ENCODE measurements at regions of chr6 and their contacts with region 1.

Region 1: GRCh38 chr6:19245656-19246055 is 591.5 kb upstream of the ID4 start:
- H3K4me3 Mint-ChIP-seq: no peak overlapping the region
- H3K27ac Mint-ChIP-seq: no peak overlapping the region
- H3K4me1 Mint-ChIP-seq: no peaks in the 10 kb centered on the region
- H3K27me3 Mint-ChIP-seq: no peaks in the 10 kb centered on the region

Region 2: DNA sequence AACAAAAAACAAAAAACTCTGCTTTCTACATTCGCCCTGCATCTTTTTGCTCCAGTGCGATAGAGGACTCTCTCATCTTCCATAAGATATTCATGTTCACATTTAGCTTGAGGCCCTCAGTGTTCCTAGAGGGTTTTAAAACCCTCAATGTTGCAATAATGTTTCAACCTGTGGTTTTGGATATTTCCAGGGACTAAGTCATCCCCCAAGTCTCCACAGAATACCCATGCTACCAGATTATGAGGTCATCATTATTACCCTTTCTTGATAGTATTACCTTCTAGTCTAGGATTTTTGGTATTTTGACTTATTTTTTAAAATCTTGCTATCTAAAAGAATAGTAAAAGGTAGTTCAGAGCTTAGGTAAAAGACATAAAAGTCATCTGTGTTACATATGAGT is 111.0 kb after region 1 on chr6:
- intact Hi-C with region 1: loop called (anchors 10 kb)
- H3K4me3 Mint-ChIP-seq: no peak overlapping the region
- H3K27ac Mint-ChIP-seq: no peak overlapping the region
- H3K4me1 Mint-ChIP-seq: no peaks in the 10 kb centered on the region
- H3K27me3 Mint-ChIP-seq: no peaks in the 10 kb centered on the region